ENCODE measurements at regions of chr19 and their contacts with region 1.

Region 1: DNA sequence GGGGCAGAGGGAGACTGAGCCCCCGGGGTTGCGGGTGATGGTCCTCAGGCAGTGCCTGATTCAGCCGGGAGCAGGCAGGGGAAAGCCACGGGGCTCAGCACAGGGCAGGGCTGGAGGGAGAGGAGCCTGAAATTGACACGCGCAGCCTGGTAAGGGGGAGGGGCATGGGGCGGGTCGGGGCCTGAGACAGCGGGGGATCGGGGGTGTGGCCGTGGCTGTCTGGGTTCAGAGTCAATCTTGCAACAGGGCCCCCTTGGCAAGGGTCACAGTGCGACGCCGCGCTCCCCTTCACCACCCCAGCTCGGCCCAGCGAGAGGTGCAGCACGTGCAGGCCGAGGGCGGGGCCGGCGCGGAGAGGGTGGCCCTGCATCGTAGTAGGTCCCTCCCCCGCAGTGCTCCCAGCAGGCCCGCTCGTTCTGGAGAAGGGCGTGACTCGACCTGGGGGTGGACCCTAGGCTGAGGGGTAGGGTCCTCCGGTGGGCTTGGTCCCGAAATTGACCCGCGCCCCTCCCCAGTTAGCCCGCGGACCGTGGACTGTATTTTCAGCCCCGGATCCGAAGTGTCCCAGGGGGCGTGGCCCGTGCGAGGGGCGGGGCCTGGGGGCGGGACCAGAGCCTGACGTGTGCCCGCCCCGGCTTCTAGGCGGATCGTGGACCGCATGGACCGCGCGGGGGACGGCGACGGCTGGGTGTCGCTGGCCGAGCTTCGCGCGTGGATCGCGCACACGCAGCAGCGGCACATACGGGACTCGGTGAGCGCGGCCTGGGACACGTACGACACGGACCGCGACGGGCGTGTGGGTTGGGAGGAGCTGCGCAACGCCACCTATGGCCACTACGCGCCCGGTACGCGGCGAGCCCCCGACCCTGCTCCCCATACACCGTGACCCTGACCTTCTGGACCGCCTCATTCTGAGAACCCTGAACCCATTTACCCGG is 6.0 kb downstream of the RCN3 start:
- DNase-seq: peak; percentile 79 to 85
- ATAC-seq: peak; percentile 91 to 92
- H3K4me3 ChIP-seq: peak overlapping the region; percentile 58
- H3K27ac ChIP-seq: peak overlapping the region; percentile 9 to 73; a peak in 3 of 6 replicates
- H3K4me1 ChIP-seq: peaks cover 7% of the 10 kb centered on the region; the same call in 1 of the 3 replicates
- CTCF ChIP-seq: peak; percentile 49
- EP300 ChIP-seq: no peak
- POLR2A ChIP-seq: no peak; the same call in 1 of the 2 replicates
- RAD21 ChIP-seq: no peak

Region 2: GRCh38 chr19:49487277-49488045 is 46.4 kb before region 1 on chr19 and contains the start of gene RPL13A:
- CTCF ChIA-PET with region 1: no interaction called
- POLR2A ChIA-PET with region 1: no interaction called
- DNase-seq: peak; percentile 98 to 100
- ATAC-seq: peak; percentile 83 to 90
- H3K4me3 ChIP-seq: peak within 1 kb of the TSS; percentile 71
- H3K27ac ChIP-seq: peak within 1 kb of the TSS; percentile 94 to 95
- H3K4me1 ChIP-seq: peaks cover 29% of the 10 kb centered on the region
- CTCF ChIP-seq: no peak
- EP300 ChIP-seq: no peak
- POLR2A ChIP-seq: peak; percentile 97
- RAD21 ChIP-seq: no peak
- polyA plus RNA-seq, gene RPL13A: 5,391 and 5,410 TPM in 2 replicates

Region 3: DNA sequence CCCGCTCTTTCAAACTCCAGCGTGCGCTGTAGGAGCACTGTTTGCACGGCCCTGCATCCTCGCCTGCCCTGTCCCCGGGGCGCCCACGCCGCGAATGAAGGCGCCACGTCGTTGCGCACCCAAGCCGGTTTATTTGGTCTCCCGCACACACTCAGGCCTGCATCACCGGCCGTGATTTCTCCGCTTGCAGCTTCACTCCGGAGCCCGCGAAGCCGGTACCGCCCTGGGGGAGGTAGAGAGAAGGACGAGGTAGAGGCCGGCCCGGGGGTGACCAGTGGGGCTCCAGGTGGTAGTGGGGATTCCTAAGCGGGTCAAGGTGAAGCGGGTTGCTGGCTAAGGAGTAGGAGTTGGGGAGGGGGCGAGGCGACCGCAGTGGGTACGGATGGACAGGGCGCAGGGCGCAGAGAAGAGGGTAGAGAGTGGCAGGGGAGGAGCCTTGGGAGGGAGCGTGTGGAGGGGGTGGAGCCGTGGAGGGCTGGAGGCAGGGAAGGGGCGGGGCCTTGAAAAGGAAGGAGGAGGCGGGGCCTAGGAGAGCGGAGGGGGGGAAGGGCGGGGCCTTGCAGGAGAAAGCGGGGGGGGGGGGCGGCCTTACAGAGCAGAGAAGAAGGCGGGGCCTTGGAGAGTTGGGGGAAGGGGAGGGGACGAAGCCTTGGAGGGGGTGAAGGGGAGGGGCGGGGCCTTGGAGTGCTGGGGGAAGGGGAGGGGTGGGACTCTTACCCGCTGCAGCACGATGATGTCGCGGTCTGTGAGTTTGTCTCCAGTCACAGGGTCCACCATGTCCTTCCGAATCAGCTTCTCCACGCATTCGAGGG is 22.0 kb after region 1 on chr19:
- CTCF ChIA-PET with region 1: interaction called, 12 read pairs
- POLR2A ChIA-PET with region 1: no interaction called
- DNase-seq: peak; percentile 72 to 76
- ATAC-seq: peak; percentile 48 to 77; a peak in 4 of 6 replicates
- H3K4me3 ChIP-seq: no peak overlapping the region
- H3K27ac ChIP-seq: no peak overlapping the region
- H3K4me1 ChIP-seq: no peaks in the 10 kb centered on the region; the same call in 1 of the 3 replicates
- CTCF ChIP-seq: no peak
- EP300 ChIP-seq: no peak
- POLR2A ChIP-seq: no peak
- RAD21 ChIP-seq: no peak

Measured in A549 (cell line).